Pancreas (tissue), 10 donors: ENCODE measurements at regions of chr2 and their contacts with region 1.

Region 1: DNA sequence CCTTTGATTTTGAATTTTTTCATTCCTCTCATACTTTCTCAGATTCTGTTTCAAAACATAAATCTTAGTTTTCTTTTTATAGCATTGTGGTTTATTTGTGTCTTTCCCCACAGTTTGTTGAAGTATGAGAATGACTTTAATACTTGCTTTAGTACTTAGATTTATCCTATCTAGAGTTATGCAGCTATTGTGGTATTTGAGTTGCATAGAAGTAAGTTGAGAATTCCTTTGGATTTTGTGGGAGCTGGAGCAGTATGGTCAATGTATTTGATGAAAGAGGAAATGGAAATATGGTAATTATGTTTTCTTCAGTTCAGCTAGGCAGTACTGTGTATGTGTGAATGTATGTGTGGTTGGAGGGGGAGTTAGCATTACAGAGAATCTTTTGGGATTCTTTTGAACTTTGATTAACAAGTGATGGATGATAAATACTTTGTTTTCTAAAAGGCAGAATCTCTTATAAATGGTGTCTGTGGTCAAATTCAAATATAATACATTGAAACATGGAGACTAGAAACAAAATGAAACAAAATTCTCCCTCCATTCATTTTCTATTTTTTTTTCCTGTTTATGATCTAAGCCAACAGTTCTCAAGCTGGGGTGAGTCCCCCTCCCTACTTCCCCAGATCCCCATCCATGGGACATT is 3.0 kb downstream of the ACVR2A start:
- DNase-seq: no peak
- ATAC-seq: no peak
- H3K4me3 ChIP-seq: no peak overlapping the region
- H3K27ac ChIP-seq: no peak overlapping the region
- H3K4me1 ChIP-seq: peaks cover 0 to 36% (median 26%) of the 10 kb centered on the region in 3 donors
- H3K27me3 ChIP-seq: no peaks in the 10 kb centered on the region
- CTCF ChIP-seq: no peak

Region 2: GRCh38 chr2:146964494-146964893 is 883.4 kb before region 1 on chr2:
- intact Hi-C with region 1: no loop called
- DNase-seq: no peak
- ATAC-seq: no peak
- H3K4me3 ChIP-seq: no peak overlapping the region
- H3K27ac ChIP-seq: no peak overlapping the region
- H3K4me1 ChIP-seq: no peaks in the 10 kb centered on the region
- H3K27me3 ChIP-seq: no peaks in the 10 kb centered on the region
- CTCF ChIP-seq: no peak

Region 3: DNA sequence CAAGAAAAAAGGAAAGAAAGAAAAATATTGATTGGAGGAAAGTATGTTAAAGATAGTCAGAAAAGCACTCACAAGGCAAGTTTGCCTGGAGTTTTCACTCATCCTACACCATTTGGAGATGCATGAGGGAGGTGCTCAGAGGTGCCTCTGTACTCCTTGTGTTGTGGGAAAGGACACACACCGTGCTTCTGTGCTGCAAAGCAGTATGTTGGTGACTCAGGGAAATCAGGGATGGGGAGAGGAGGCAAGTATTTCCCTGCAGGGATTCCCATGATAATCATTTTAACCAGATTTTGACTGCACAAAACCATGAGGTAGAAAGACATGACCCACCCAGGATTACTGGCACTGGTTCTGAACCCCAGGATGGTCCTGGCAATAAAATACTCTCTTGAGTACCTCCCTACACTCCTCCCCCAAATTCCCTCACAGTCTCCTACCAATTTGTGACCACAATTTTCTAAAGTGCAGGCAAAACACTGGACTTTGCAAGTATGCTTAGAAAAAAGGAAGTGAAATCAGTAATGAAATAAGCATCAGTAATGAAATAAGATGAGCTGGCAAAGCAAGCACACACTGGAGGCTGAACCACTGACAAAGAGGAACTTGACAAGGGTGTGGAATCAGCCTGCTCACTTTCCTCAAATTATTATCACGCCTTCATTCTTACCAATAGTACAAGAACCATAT is 158.5 kb before region 1 on chr2:
- intact Hi-C with region 1: no loop called
- DNase-seq: no peak
- ATAC-seq: peak in 2 of 4 donors; percentile 61 to 73
- H3K4me3 ChIP-seq: no peak overlapping the region
- H3K27ac ChIP-seq: no peak overlapping the region
- H3K4me1 ChIP-seq: no peaks in the 10 kb centered on the region
- H3K27me3 ChIP-seq: no peaks in the 10 kb centered on the region
- CTCF ChIP-seq: no peak

Region 4: GRCh38 chr2:147869934-147870333 is 22.1 kb after region 1 on chr2:
- intact Hi-C with region 1: loop called in 1 of 3 experiments (anchors 2 kb)
- DNase-seq: no peak
- ATAC-seq: no peak
- H3K4me3 ChIP-seq: no peak overlapping the region
- H3K27ac ChIP-seq: no peak overlapping the region
- H3K4me1 ChIP-seq: peaks cover 0 to 15% (median 9%) of the 10 kb centered on the region in 3 donors
- H3K27me3 ChIP-seq: no peaks in the 10 kb centered on the region
- CTCF ChIP-seq: no peak